IMR-90 (cell line): ENCODE measurements at regions of chr10 and their contacts with region 1.

Region 1: GRCh38 chr10:102055647-102056419 is at the start of gene ARMH3:
- DNase-seq: peak; percentile 97
- ATAC-seq: peak; percentile 98
- H3K4me3 ChIP-seq: peak within 1 kb of the TSS; percentile 82
- H3K27ac ChIP-seq: peak within 1 kb of the TSS; percentile 88
- H3K4me1 ChIP-seq: no peaks in the 10 kb centered on the region
- H3K27me3 ChIP-seq: no peaks in the 10 kb centered on the region
- CTCF ChIP-seq: no peak
- POLR2A ChIP-seq: 0 out of 2 replicates have a peak, but pooled peaks have one; percentile 48
- RAD21 ChIP-seq: no peak
- total RNA-seq, gene ARMH3: 13.1 and 20.6 TPM in 2 replicates

Region 2: DNA sequence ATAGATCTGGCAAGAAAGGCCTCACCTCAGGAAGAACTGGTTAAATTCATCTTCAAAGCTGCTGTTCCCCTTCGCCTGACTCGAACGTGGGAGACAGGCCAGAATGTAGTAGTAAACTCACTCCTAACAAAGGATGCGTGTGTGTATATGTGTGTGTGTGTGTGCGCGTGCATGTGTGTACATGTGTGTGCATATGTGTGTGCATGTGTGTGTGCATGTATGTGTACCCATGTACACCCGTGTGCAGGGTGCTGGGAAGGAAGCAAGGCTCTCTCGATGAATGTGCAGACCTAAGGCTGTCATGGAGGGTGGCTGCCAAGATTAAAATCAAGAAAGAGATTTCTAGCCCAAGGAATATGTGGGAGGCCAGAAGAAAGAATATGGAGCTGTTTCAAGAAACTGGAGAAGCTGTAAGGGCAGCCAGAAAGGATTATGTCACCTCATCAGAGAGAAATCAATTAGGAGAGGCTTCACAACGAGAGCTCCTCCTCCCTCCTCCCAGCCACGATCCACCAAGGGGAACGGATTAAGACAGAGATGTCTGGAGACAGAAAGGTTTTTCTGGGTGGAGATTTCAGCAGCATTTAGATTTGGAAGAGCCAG is 792.6 kb before region 1 on chr10:
- CTCF ChIA-PET with region 1: no interaction called
- POLR2A ChIA-PET with region 1: no interaction called
- dilution Hi-C with region 1: no loop called
- in situ Hi-C with region 1: no loop called
- intact Hi-C with region 1: no loop called
- DNase-seq: no peak
- ATAC-seq: no peak
- H3K4me3 ChIP-seq: no peak overlapping the region
- H3K27ac ChIP-seq: no peak overlapping the region
- H3K4me1 ChIP-seq: no peaks in the 10 kb centered on the region
- H3K27me3 ChIP-seq: peaks cover 55% of the 10 kb centered on the region
- CTCF ChIP-seq: no peak
- POLR2A ChIP-seq: no peak
- RAD21 ChIP-seq: no peak

Region 3: DNA sequence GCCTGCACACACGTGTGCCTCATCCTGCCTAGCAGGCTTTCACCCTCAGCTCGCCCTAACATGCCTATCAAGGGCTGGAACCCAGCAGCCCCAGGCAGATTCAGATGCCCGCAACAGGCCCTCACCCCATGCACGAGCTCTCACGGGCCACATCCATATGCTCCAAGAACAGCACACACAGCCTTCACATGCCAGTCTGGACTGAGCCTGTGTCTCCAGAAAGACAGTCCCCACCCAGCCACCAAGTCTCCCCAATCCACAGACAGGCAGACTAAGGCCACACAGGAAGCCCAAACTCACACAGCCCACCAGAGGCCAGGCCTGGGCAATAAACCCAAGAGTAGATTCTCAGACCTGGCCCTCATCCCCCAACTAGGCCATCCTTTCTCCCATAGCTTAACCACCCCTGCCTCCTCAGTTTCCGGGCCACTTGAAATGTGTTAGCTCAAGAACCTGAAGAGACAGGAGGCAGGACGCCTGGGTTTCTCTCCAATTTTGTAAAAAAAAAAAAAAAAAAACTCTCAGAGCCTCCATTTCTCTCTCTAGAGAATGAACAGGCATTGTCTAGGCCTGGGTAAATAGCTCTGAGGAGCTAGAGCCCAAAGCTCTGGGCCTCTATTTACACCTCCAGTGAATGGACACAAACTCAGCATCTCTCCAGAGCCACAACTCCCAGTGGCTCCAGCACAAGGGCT is 57.6 kb after region 1 on chr10:
- CTCF ChIA-PET with region 1: no interaction called
- POLR2A ChIA-PET with region 1: interaction called, 31 read pairs
- dilution Hi-C with region 1: no loop called
- in situ Hi-C with region 1: no loop called
- intact Hi-C with region 1: no loop called
- DNase-seq: no peak
- ATAC-seq: no peak; the same call in 1 of the 2 replicates
- H3K4me3 ChIP-seq: peak overlapping the region; percentile 92
- H3K27ac ChIP-seq: peak overlapping the region; percentile 94
- H3K4me1 ChIP-seq: peaks cover 31% of the 10 kb centered on the region
- H3K27me3 ChIP-seq: no peaks in the 10 kb centered on the region
- CTCF ChIP-seq: no peak
- POLR2A ChIP-seq: no peak
- RAD21 ChIP-seq: no peak

Region 4: DNA sequence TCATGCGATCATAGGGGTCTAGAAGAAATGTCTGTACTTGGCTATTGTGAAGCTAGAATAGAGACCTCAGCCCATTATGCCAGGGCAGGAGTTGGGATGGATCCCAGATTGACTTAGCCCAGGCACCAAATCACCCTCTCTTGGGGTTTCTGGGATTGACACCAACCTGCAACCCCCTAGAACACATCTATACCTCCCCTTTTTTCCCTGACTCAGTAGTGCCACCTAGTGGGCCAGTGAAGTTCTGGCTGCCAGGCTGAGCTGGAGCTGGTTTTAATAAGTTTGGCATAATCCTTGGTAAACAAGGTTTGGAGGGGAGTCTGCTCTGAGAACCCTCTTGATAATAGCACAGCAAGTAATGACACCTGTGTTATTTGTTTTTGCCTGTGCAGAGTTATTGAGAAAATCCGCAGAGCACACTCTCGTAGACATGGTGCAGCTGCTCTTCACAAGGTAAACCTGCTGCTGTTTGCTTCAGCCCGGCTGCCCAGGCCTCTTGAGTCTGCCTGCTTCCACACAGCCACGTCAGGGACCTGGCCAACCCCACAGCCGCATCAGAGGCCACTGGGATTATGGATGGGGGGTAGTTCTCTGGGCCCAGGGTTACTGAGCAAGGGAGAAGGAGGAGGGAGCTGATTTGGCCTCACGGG is 296.4 kb after region 1 on chr10:
- CTCF ChIA-PET with region 1: no interaction called
- POLR2A ChIA-PET with region 1: no interaction called
- dilution Hi-C with region 1: no loop called
- in situ Hi-C with region 1: no loop called
- intact Hi-C with region 1: no loop called
- DNase-seq: peak; percentile 54
- ATAC-seq: peak; percentile 92
- H3K4me3 ChIP-seq: no peak overlapping the region
- H3K27ac ChIP-seq: no peak overlapping the region
- H3K4me1 ChIP-seq: no peaks in the 10 kb centered on the region
- H3K27me3 ChIP-seq: no peaks in the 10 kb centered on the region
- CTCF ChIP-seq: peak; percentile 82
- POLR2A ChIP-seq: no peak
- RAD21 ChIP-seq: peak; percentile 81